A549 (cell line): ENCODE measurements at regions of chr15 and their contacts with region 1.

Region 1: GRCh38 chr15:71114896-71115554 is at the start of gene THSD4:
- DNase-seq: peak; percentile 93 to 99
- ATAC-seq: peak; percentile 76 to 79
- H3K4me3 ChIP-seq: peak within 1 kb of the TSS; percentile 59
- H3K27ac ChIP-seq: peak within 1 kb of the TSS; percentile 93 to 94
- H3K4me1 ChIP-seq: peaks cover 54% of the 10 kb centered on the region
- CTCF ChIP-seq: peak; percentile 99
- EP300 ChIP-seq: no peak; a peak in 1 of 5 replicates
- POLR2A ChIP-seq: peak; percentile 48
- RAD21 ChIP-seq: peak; percentile 77 to 92
- polyA plus RNA-seq, gene THSD4: 40.7 and 47.4 TPM in 2 replicates

Region 2: DNA sequence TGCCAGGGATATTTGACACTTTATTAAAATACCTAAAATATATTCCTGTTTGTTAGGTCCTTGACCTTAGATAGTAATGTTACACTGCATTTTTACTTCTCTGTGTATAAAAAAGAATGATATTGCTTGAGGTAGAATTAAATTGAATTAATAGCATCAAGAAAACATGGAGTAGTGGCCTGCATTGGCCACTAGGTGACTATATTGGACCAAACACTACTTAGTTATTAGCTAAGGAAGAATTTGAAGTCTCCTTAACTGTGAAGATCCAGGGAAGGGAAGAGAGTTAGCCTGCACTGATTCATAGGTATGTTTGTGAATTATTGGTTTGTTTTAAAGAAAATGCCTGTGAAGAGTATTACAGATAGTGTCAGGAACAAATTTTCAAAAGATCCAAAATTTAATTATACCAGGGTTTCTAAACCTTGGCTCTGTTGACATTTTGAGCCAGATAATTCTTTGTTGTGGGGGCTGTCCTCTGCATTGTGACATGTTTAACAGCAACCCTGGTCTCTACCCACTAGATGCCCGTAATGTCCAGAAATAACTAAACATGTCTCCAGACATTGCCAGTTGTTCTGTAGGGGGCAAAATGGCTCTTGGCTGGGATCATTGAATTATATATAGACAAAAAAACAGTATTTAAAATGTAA is 103.4 kb before region 1 on chr15:
- CTCF ChIA-PET with region 1: interaction called, 11 read pairs
- POLR2A ChIA-PET with region 1: interaction called, 3 read pairs
- DNase-seq: peak; percentile 35 to 75
- ATAC-seq: peak; percentile 92 to 94
- H3K4me3 ChIP-seq: no peak overlapping the region
- H3K27ac ChIP-seq: peak overlapping the region; percentile 36 to 71; a peak in 4 of 6 replicates
- H3K4me1 ChIP-seq: peaks cover 6% of the 10 kb centered on the region
- CTCF ChIP-seq: peak; percentile 98
- EP300 ChIP-seq: no peak
- POLR2A ChIP-seq: no peak
- RAD21 ChIP-seq: peak; percentile 97 to 98

Region 3: GRCh38 chr15:71103102-71103676 is 11.8 kb before region 1 on chr15:
- CTCF ChIA-PET with region 1: interaction called, 43 read pairs
- POLR2A ChIA-PET with region 1: interaction called, 3 read pairs
- DNase-seq: peak in 1 of 2 experiments; percentile 61
- ATAC-seq: peak; percentile 86 to 97
- H3K4me3 ChIP-seq: no peak overlapping the region
- H3K27ac ChIP-seq: peak overlapping the region; percentile 22 to 50; a peak in 4 of 6 replicates
- H3K4me1 ChIP-seq: no peaks in the 10 kb centered on the region
- CTCF ChIP-seq: peak; percentile 60
- EP300 ChIP-seq: no peak
- POLR2A ChIP-seq: no peak
- RAD21 ChIP-seq: peak; percentile 50 to 63

Region 4: DNA sequence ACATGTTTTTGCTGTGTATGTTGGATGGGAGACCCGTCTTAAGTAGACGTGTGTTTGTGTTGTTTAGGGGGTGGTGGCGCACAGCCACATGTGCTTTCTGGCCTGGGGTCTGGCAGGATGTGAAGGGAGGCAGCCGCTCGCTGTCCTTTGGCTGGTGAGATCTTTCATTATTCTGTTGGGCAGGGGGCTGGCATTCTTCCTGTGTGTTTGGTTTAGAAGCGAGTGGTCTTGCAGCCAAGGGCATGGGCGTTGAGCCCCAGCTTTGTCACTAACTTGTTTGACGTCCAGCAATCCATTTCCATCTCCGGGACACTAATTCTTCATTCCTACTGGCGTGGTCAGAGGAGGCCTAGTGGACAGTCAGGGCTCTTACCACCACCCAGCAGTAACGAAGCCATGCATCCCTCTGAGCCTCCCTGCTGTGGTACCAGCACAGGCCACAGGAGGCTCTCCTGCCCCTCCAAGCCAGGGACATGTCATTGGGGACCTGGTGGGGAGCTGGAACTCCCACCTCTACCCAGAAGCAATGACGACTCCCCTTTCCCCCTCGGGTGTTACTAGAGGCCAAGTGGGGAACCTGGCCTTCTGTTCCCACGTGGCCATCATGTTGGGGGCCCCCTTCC is 10.9 kb after region 1 on chr15:
- CTCF ChIA-PET with region 1: interaction called, 23 read pairs
- POLR2A ChIA-PET with region 1: interaction called, 5 read pairs
- DNase-seq: peak; percentile 68 to 74
- ATAC-seq: peak; percentile 68 to 85; a peak in 5 of 6 replicates
- H3K4me3 ChIP-seq: no peak overlapping the region
- H3K27ac ChIP-seq: peak overlapping the region in 1 of 2 experiments; percentile 19; a peak in 3 of 6 replicates
- H3K4me1 ChIP-seq: peaks cover 39% of the 10 kb centered on the region
- CTCF ChIP-seq: no peak
- EP300 ChIP-seq: no peak
- POLR2A ChIP-seq: no peak
- RAD21 ChIP-seq: peak in 1 of 2 experiments; percentile 30; a peak in 2 of 5 replicates

Region 5: GRCh38 chr15:71151081-71151480 is 36.1 kb after region 1 on chr15:
- CTCF ChIA-PET with region 1: interaction called, 10 read pairs
- POLR2A ChIA-PET with region 1: no interaction called
- DNase-seq: no peak
- ATAC-seq: no peak
- H3K4me3 ChIP-seq: no peak overlapping the region
- H3K27ac ChIP-seq: no peak overlapping the region
- H3K4me1 ChIP-seq: peaks cover 40% of the 10 kb centered on the region
- CTCF ChIP-seq: no peak
- EP300 ChIP-seq: no peak
- POLR2A ChIP-seq: no peak
- RAD21 ChIP-seq: no peak